Natural killer cell (primary cell): ENCODE measurements at regions of chr7 and their contacts with region 1.

Region 1: GRCh38 chr7:19404912-19405329 is 259.7 kb upstream of the FERD3L start:
- DNase-seq: peak in 1 of 2 donors; percentile 14
- ATAC-seq: peak; percentile 63 to 80 (median 77)
- H3K4me3 ChIP-seq: no peak overlapping the region
- H3K4me3 Mint-ChIP-seq: peak overlapping the region; percentile 79
- H3K27ac ChIP-seq: no peak overlapping the region
- H3K27ac Mint-ChIP-seq: peak overlapping the region; percentile 30 to 80
- H3K4me1 ChIP-seq: peaks cover 5% of the 10 kb centered on the region
- H3K4me1 Mint-ChIP-seq: peaks cover 15% of the 10 kb centered on the region in 2 donors
- H3K27me3 ChIP-seq: no peaks in the 10 kb centered on the region
- H3K27me3 Mint-ChIP-seq: no peaks in the 10 kb centered on the region
- CTCF ChIP-seq: no peak

Region 2: GRCh38 chr7:17745610-17746009 is 1659.3 kb before region 1 on chr7:
- intact Hi-C with region 1: loop called (anchors 5 kb)
- DNase-seq: no peak
- ATAC-seq: no peak
- H3K4me3 ChIP-seq: no peak overlapping the region
- H3K4me3 Mint-ChIP-seq: no peak overlapping the region
- H3K27ac ChIP-seq: no peak overlapping the region
- H3K27ac Mint-ChIP-seq: no peak overlapping the region
- H3K4me1 ChIP-seq: no peaks in the 10 kb centered on the region
- H3K4me1 Mint-ChIP-seq: no peaks in the 10 kb centered on the region
- H3K27me3 ChIP-seq: no peaks in the 10 kb centered on the region
- H3K27me3 Mint-ChIP-seq: peaks cover 0 to 3% of the 10 kb centered on the region in 2 donors
- CTCF ChIP-seq: no peak

Region 3: GRCh38 chr7:19421871-19422270 is 16.9 kb after region 1 on chr7:
- intact Hi-C with region 1: loop called (anchors 2 kb)
- DNase-seq: no peak
- ATAC-seq: no peak
- H3K4me3 ChIP-seq: no peak overlapping the region
- H3K4me3 Mint-ChIP-seq: no peak overlapping the region
- H3K27ac ChIP-seq: no peak overlapping the region
- H3K27ac Mint-ChIP-seq: no peak overlapping the region
- H3K4me1 ChIP-seq: peaks cover 12% of the 10 kb centered on the region
- H3K4me1 Mint-ChIP-seq: peaks cover 31 to 36% of the 10 kb centered on the region in 2 donors
- H3K27me3 ChIP-seq: no peaks in the 10 kb centered on the region
- H3K27me3 Mint-ChIP-seq: peaks cover 0 to 3% of the 10 kb centered on the region in 2 donors
- CTCF ChIP-seq: no peak